ENCODE measurements at regions of chr3 and their contacts with region 1.

Region 1: GRCh38 chr3:33787328-33788009 is 11.0 kb upstream of the PDCD6IP start:
- DNase-seq: peak; percentile 70
- ATAC-seq: peak; percentile 84
- H3K4me3 Mint-ChIP-seq: peak overlapping the region; percentile 41
- H3K27ac Mint-ChIP-seq: no peak overlapping the region
- H3K4me1 Mint-ChIP-seq: peaks cover 16% of the 10 kb centered on the region
- H3K27me3 Mint-ChIP-seq: peaks cover 23% of the 10 kb centered on the region

Region 2: GRCh38 chr3:33131331-33132018 is 656.0 kb before region 1 on chr3:
- CTCF ChIA-PET with region 1: interaction called, 10 read pairs
- DNase-seq: peak; percentile 54
- ATAC-seq: peak; percentile 73
- H3K4me3 Mint-ChIP-seq: no peak overlapping the region
- H3K27ac Mint-ChIP-seq: no peak overlapping the region
- H3K4me1 Mint-ChIP-seq: peaks cover 6% of the 10 kb centered on the region
- H3K27me3 Mint-ChIP-seq: no peaks in the 10 kb centered on the region

Region 3: GRCh38 chr3:33490641-33491241 is 296.7 kb before region 1 on chr3:
- CTCF ChIA-PET with region 1: no interaction called
- DNase-seq: no peak
- ATAC-seq: no peak
- H3K4me3 Mint-ChIP-seq: no peak overlapping the region
- H3K27ac Mint-ChIP-seq: no peak overlapping the region
- H3K4me1 Mint-ChIP-seq: no peaks in the 10 kb centered on the region
- H3K27me3 Mint-ChIP-seq: no peaks in the 10 kb centered on the region

Region 4: DNA sequence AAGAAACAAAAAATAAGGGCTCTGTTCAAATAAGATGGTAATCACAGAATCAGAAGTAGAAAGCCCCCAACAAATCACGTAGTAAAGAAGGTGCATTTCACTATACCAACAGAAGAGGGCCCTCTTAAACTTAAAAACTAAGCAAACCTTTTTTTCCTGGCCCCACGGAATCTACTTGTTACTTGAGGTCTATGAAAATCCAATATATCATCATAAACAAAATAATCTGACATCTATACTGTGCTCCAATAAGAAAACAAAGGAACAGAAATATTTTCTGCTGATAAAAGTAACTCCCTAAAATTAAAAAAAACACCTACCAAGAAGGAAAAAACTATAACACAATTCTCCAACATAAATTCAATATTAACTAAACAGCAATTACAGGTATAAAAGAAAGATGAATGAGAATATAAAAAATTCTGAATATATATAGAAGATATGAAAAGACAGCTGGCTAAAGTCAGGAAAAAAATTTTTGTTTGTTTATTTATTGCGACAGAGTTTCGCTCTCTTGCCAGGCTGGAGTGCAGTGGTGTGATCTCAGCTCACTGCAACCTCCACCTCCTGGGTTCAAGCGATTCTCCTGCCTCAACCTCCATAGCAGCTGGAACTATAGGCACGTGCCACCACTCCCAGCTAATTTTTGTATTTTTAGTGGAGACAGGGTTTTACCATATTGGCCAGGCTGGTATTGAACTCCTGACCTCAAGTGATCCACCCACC is 151.2 kb before region 1 on chr3:
- CTCF ChIA-PET with region 1: interaction called, 13 read pairs
- DNase-seq: no peak
- ATAC-seq: no peak
- H3K4me3 Mint-ChIP-seq: no peak overlapping the region
- H3K27ac Mint-ChIP-seq: no peak overlapping the region
- H3K4me1 Mint-ChIP-seq: peaks cover 6% of the 10 kb centered on the region
- H3K27me3 Mint-ChIP-seq: no peaks in the 10 kb centered on the region

Region 5: DNA sequence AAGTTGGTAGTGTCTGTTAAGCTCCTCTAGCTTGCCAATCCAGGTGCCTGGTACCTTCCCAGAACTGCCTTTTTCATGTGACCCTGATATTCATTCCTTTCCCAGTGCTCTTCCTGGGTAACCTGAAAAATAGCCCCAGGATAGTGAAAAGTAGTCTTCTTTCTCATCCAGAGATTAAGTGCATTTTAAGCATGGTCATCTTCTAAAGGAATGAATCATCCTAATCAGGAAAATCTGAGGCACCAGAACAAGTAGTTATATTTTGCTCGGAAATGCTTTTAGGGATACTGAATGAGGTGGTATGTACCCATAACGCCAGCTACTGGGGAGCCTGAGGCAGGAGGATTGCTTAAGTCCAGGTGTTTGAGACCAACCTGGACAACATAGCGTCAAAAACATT is 12.1 kb before region 1 on chr3:
- CTCF ChIA-PET with region 1: interaction called, 13 read pairs
- DNase-seq: no peak
- ATAC-seq: no peak
- H3K4me3 Mint-ChIP-seq: no peak overlapping the region
- H3K27ac Mint-ChIP-seq: no peak overlapping the region
- H3K4me1 Mint-ChIP-seq: no peaks in the 10 kb centered on the region
- H3K27me3 Mint-ChIP-seq: no peaks in the 10 kb centered on the region

Region 6: DNA sequence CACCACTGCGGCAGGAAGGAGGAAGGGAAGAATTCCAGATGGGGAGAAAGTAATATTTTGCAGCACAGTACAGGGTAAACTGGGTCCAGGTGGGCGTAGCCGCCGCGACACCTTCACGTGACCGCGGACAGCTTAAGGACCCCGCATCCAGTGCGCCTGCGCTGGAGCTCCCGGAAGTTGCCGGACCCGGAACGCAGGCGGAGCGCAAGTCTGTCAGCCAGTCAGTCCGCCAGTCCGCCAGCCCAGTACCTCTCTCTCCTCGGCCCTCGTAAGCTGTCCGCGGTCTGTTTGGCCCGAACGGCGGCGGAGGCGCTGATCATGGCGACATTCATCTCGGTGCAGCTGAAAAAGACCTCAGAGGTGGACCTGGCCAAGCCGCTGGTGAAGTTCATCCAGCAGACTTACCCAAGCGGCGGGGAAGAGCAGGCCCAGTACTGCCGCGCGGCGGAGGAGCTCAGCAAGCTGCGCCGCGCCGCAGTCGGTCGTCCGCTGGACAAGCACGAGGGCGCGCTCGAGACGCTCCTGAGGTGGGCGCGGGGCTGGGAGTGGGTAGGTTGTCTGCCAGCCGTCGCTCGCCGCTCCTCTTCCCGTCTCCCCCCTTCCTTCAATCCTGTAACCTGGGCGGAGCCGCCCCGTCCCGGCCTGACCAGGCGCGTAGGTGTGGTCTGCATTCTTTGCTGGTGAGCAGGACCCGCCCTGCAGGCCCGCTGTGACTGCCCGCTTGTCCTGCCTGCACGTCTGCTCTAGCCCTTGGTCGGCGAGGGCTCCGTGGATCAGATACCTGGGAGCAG is 11.1 kb after region 1 on chr3 and contains the start of gene PDCD6IP:
- CTCF ChIA-PET with region 1: interaction called, 37 read pairs
- DNase-seq: peak; percentile 93
- ATAC-seq: peak; percentile 91
- H3K4me3 Mint-ChIP-seq: peak within 1 kb of the TSS; percentile 94
- H3K27ac Mint-ChIP-seq: peak within 1 kb of the TSS; percentile 96
- H3K4me1 Mint-ChIP-seq: peaks cover 55% of the 10 kb centered on the region
- H3K27me3 Mint-ChIP-seq: peaks cover 4% of the 10 kb centered on the region
- total RNA-seq, gene PDCD6IP: 183 to 208 TPM

Measured in activated CD8-positive, alpha-beta memory T cell treated with anti-CD3 and anti-CD28 coated beads, Interleukin-2, amount 10 ng/mL, durations not matched to agents 7 days and 5 days (primary cell).